Right ventricle myocardium superior (tissue), 1 donor: ENCODE measurements at regions of chr6 and their contacts with region 1.

Region 1: GRCh38 chr6:156686995-156687788 is 90.0 kb upstream of the ARID1B start:
- DNase-seq: peak; percentile 94
- ATAC-seq: peak; percentile 95

Region 2: DNA sequence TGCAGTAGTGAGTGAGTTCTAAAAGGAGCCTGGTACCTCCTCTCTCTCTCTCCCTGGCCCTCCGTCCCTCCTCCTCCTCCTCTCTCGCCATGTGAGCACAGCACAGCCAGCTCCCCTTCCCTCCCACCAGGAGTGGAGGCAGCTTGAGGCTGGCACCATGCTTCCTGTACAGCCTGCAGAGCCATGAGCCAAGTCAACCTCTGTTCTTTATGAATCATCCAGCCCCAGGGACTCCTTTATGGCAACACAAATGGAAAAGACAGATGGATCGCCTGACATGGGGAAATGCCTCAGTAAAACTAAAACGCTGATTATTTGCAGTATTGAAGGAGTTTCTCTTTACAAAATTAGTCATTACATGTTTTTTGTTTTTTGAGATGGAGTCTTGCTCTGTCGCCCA is 143.8 kb before region 1 on chr6:
- intact Hi-C with region 1: no loop called
- DNase-seq: no peak
- ATAC-seq: no peak

Region 3: DNA sequence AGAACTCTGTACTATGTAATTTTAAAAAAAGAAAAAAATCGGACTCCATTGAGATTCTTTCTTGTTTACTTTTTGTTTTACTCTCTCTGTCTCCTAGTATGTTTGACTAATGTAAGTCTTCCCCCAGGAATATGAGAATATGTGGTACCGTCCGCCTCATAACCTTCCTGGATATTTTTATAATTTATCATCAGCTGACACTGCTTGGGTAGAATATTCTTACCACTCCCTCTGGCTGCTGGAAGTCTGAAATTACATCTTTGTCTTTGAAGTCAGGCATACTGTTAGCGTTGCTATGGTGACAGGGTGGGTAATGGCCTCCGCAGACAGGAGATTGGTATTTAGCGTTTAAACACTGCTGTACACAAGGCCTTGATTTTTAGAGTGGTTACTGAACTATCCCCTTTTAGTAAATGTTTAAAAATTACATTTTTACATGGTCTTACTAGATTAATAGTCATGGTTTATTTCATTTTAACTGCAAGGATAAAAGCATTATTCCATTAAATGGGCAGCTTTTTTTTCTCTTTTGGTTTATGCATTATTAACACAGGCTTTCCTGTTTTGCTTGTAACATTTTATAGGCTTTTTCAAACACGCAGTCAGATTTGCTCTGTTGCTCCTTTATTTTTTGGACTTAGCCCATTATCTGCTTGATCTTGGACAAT is 266.4 kb after region 1 on chr6:
- intact Hi-C with region 1: loop called (anchors 10 kb)
- DNase-seq: no peak
- ATAC-seq: peak; percentile 72